Endothelial cell of umbilical vein (primary cell): ENCODE measurements at regions of chr1 and their contacts with region 1.

Region 1: DNA sequence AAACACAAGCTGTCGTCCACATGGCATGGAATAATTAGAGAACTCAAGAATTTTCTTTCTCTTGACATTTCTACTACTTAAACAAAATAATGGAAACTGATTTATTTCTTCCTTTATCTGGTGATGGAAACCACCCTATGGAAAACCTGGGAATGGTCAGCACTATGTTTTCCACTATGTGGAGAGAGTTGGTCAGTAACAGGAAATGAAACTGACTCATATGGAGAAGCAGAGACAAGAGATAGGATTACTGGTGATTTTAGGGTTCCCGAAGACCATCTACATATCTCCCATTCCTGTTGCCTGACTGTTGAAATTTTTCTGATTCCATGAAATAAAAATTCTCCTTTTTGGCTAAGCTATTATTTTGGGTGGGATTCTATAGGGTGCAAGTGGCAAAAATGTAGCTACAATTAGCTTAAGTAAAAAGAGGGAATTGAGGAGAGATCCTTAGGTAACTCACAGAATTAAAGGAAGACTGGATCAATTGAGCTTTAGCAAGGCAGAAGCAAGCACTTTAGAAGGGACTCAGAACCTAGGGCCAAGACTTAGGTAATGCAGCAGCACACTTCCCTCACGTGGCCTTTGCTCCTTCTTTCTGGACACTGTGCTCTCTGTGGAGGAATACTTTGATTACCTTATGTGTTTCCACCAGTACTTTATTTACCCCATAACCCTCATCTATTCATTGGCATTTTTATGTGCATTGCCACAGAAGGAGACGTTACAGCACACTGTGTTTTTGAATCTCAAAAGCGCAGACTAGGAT is 89.6 kb downstream of the LEPR start:
- DNase-seq: peak; percentile 86
- H3K4me3 ChIP-seq: no peak overlapping the region
- H3K27ac ChIP-seq: no peak overlapping the region
- H3K4me1 ChIP-seq: peaks cover 27% of the 10 kb centered on the region
- H3K27me3 ChIP-seq: no peaks in the 10 kb centered on the region
- CTCF ChIP-seq: no peak
- POLR2A ChIP-seq: no peak

Region 2: GRCh38 chr1:65174585-65174984 is 335.5 kb before region 1 on chr1:
- CTCF ChIA-PET with region 1: no interaction called
- POLR2A ChIA-PET with region 1: no interaction called
- dilution Hi-C with region 1: no loop called
- intact Hi-C with region 1: no loop called
- DNase-seq: no peak
- H3K4me3 ChIP-seq: no peak overlapping the region
- H3K27ac ChIP-seq: no peak overlapping the region
- H3K4me1 ChIP-seq: no peaks in the 10 kb centered on the region
- H3K27me3 ChIP-seq: no peaks in the 10 kb centered on the region
- CTCF ChIP-seq: no peak
- POLR2A ChIP-seq: no peak

Region 3: DNA sequence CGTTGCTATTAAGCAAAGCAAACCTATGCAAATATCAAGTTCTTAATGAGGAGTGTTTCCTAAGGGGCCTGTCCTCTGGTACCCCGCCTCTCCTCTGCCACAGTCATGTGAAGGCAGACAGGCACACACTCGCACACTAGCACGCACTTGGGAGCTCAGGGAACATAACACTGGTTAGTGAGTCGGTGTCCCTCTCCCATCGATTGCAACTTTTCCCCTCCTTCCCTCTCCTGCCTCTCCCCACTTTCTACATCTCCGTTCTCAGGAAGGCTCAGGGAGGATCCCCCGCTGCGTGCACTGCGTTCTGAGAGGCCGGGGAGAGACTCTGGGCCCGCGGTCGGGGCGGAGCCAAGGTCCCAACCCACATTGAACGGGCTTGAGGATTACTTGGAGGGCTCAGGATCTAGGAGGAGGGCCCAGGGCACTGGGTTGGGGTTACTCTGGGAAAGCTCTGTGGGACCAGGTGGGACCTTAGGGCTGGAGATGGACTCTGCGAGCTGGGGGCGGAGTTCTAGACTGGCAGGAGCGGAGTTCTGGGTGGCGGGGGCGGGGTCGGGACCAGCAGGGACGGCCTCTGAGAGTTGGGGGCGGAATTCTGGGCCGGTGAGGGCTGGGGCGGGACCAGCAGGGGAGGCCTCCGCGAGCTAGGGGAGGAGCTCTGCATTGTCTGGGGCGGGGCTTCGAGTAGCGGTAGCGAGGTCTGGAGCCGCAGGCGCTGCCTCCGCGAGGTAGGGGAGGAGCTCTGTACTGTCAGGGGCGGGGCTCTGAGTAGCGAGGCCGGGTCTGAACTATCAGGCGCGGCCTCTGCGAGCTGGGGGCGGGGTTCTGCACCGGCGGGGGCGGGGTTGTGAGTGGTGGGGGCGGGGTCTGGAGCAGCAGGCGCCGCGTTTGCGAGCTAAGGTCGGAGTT is 90.2 kb before region 1 on chr1:
- CTCF ChIA-PET with region 1: no interaction called
- POLR2A ChIA-PET with region 1: no interaction called
- dilution Hi-C with region 1: no loop called
- intact Hi-C with region 1: no loop called
- DNase-seq: peak; percentile 99
- H3K4me3 ChIP-seq: peak overlapping the region; percentile 64 to 76 (median 71)
- H3K27ac ChIP-seq: peak overlapping the region; percentile 62
- H3K4me1 ChIP-seq: peaks cover 37% of the 10 kb centered on the region
- H3K27me3 ChIP-seq: no peaks in the 10 kb centered on the region
- CTCF ChIP-seq: no peak
- POLR2A ChIP-seq: peak; percentile 5

Region 4: DNA sequence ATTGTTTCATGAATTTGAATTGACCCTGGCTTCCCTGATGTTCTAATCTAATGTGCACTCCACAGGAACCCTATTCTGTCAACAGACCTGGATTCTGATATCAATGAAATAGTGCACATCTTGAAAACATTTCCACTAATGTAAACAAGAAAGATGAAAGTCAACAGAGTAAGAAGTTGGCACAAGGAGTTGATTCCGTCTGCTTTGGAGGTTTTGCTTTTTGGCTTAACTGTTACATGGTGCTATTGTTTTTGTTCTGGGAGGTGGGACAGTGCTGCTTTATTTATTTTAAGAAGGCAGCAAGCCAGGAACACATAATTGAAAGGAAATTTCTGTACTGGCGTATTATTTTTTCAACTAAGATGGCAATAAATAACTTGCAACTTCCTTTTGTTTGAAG is 16.3 kb before region 1 on chr1:
- CTCF ChIA-PET with region 1: no interaction called
- POLR2A ChIA-PET with region 1: no interaction called
- dilution Hi-C with region 1: no loop called
- intact Hi-C with region 1: loop called (anchors 1 kb)
- DNase-seq: peak; percentile 90
- H3K4me3 ChIP-seq: no peak overlapping the region
- H3K27ac ChIP-seq: no peak overlapping the region
- H3K4me1 ChIP-seq: peaks cover 13% of the 10 kb centered on the region
- H3K27me3 ChIP-seq: no peaks in the 10 kb centered on the region
- CTCF ChIP-seq: no peak
- POLR2A ChIP-seq: no peak

Region 5: GRCh38 chr1:65581119-65581518 is 71.0 kb after region 1 on chr1:
- CTCF ChIA-PET with region 1: no interaction called
- POLR2A ChIA-PET with region 1: no interaction called
- dilution Hi-C with region 1: no loop called
- intact Hi-C with region 1: no loop called
- DNase-seq: peak; percentile 36
- H3K4me3 ChIP-seq: no peak overlapping the region
- H3K27ac ChIP-seq: no peak overlapping the region
- H3K4me1 ChIP-seq: no peaks in the 10 kb centered on the region
- H3K27me3 ChIP-seq: no peaks in the 10 kb centered on the region
- CTCF ChIP-seq: no peak
- POLR2A ChIP-seq: no peak